Tibial artery (tissue), 4 donors: ENCODE measurements at regions of chr1 and their contacts with region 1.

Region 1: GRCh38 chr1:42414551-42415496 is 34.2 kb downstream of the RIMKLA start:
- DNase-seq: no peak
- H3K4me3 ChIP-seq: no peak overlapping the region
- H3K27ac ChIP-seq: no peak overlapping the region
- H3K4me1 ChIP-seq: no peaks in the 10 kb centered on the region
- H3K27me3 ChIP-seq: peaks cover 0 to 9% of the 10 kb centered on the region in 2 donors
- CTCF ChIP-seq: no peak

Region 2: GRCh38 chr1:42240966-42241755 is 173.7 kb before region 1 on chr1:
- intact Hi-C with region 1: no loop called
- DNase-seq: no peak
- H3K4me3 ChIP-seq: no peak overlapping the region
- H3K27ac ChIP-seq: no peak overlapping the region
- H3K4me1 ChIP-seq: peaks cover 0 to 9% (median 3%) of the 10 kb centered on the region in 4 donors
- H3K27me3 ChIP-seq: no peaks in the 10 kb centered on the region
- CTCF ChIP-seq: no peak

Region 3: DNA sequence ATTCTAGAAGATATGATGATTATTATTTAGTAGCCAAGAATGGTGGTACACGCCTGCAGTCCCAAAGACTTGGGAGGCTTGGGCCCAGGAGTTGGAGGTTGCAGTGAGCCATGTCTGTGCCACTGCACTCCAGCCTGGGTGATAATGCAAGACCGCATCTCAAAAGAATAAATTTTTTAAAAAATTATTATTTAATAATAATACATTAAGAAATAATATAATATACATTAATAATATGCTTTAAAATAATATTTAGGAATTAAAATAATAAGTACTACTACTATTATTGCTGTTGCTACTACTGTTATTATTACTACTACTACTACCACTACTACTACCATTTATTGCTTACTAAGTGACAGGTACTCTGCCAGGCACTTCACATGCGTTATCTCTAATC is 75.4 kb after region 1 on chr1:
- intact Hi-C with region 1: loop called (anchors 5 kb)
- DNase-seq: no peak
- H3K4me3 ChIP-seq: no peak overlapping the region
- H3K27ac ChIP-seq: no peak overlapping the region
- H3K4me1 ChIP-seq: no peaks in the 10 kb centered on the region
- H3K27me3 ChIP-seq: no peaks in the 10 kb centered on the region
- CTCF ChIP-seq: no peak